Activated naive CD4-positive, alpha-beta T cell treated with anti-CD3 and anti-CD28 coated beads for 36 hours (primary cell): ENCODE measurements at regions of chr3 and their contacts with region 1.

Region 1: DNA sequence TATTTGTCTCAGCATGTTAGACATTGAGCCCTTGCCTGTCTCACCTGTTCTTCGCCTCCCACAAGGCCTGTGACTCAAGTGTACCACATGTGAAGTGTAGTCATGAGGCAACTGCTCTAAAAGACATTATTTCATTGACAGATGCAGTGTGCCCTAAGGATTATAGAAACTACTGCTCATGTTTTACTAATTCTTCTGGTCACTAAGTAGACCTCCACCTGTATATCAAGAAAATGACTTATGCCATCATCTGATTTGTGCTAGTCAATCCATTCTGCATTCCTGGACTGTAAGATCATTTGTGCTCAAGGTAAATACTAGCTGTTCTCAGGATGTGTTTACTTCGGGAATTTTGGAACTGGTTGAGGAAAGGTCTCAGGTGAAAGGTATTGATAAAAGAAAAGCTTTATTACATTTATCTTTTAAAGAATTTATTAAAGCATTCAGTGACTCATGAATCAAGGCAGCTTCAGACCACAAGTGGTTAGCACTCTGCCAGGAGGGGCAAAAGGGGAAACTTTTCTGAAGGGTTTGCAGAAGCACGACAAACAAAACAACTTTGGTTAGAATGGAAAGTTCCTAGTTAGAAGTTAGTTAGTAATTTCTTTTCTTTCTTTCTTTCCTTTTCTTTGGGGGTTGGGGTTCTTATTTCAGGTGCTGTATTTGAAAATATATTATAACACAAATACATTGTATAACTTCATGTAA is 465.3 kb upstream of the CBLB start:
- DNase-seq: peak; percentile 80
- H3K4me3 Mint-ChIP-seq: peak overlapping the region; percentile 68
- H3K27ac Mint-ChIP-seq: peak overlapping the region; percentile 95
- H3K4me1 Mint-ChIP-seq: peaks cover 71% of the 10 kb centered on the region
- H3K27me3 Mint-ChIP-seq: no peaks in the 10 kb centered on the region

Region 2: DNA sequence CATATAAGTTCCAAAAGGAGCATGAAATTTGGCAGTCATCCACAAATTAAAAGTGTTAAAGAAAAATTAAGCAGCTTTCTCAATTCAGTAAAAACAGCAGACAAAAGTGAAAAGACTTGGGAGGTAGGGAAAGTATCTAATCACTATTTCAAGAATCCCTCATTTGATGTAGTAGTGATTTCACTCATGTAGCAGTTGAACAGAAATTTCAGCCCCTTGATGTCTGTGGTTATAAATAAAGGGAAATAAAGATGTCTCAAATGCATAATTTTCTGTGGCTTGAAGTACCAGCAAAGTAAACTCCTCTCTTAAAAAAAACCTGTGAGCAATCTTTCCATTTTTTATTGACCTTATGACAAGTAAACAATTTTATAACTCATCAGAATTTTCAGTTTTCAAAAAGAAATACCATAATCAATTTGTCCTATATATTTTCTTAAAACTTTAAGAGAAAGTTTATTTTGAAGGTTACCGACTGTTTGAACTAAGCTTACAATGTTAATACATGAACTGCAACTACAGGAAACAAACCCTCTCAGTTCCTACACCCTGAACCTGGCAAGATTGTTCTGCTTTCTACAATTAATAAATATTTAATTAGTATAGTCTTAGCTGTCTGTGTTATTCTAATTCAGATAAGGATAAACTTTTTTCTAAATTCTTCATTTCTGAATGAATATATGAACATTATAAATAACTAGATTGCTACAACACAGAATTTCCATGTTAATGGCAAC is 559.5 kb before region 1 on chr3:
- CTCF ChIA-PET with region 1: no interaction called
- intact Hi-C with region 1: loop called (anchors 1 kb)
- DNase-seq: no peak
- H3K4me3 Mint-ChIP-seq: no peak overlapping the region
- H3K27ac Mint-ChIP-seq: peak overlapping the region; percentile 26
- H3K4me1 Mint-ChIP-seq: peaks cover 74% of the 10 kb centered on the region
- H3K27me3 Mint-ChIP-seq: no peaks in the 10 kb centered on the region

Region 3: GRCh38 chr3:106025151-106025722 is 308.8 kb before region 1 on chr3:
- CTCF ChIA-PET with region 1: no interaction called
- intact Hi-C with region 1: no loop called
- DNase-seq: no peak
- H3K4me3 Mint-ChIP-seq: no peak overlapping the region
- H3K27ac Mint-ChIP-seq: no peak overlapping the region
- H3K4me1 Mint-ChIP-seq: peaks cover 5% of the 10 kb centered on the region
- H3K27me3 Mint-ChIP-seq: no peaks in the 10 kb centered on the region

Region 4: GRCh38 chr3:106119614-106120082 is 214.4 kb before region 1 on chr3:
- CTCF ChIA-PET with region 1: no interaction called
- intact Hi-C with region 1: loop called (anchors 2 kb)
- DNase-seq: peak; percentile 57
- H3K4me3 Mint-ChIP-seq: no peak overlapping the region
- H3K27ac Mint-ChIP-seq: peak overlapping the region; percentile 73
- H3K4me1 Mint-ChIP-seq: peaks cover 28% of the 10 kb centered on the region
- H3K27me3 Mint-ChIP-seq: no peaks in the 10 kb centered on the region

Region 5: DNA sequence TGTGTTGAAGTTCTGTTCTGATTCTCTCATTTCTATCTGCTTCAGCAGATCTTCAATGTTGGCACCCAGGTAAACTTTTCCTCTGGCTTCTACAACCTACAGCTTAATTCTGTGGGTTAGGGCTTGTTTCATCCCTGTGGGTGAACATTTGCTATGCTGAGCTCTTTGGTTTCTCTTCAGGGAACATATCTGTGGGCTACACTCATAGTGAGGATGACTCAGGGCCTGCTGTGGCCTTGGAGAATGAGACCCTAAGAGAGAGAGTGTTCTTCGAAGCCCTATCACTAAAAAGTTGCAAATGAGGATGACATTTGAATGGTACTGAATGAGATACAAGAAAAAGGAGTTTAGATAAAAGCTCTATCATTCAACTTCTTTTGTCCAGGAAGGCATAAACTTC is 119.0 kb before region 1 on chr3:
- CTCF ChIA-PET with region 1: interaction called, 3 read pairs
- intact Hi-C with region 1: loop called (anchors 1 kb)
- DNase-seq: peak; percentile 56
- H3K4me3 Mint-ChIP-seq: no peak overlapping the region
- H3K27ac Mint-ChIP-seq: peak overlapping the region; percentile 81
- H3K4me1 Mint-ChIP-seq: peaks cover 61% of the 10 kb centered on the region
- H3K27me3 Mint-ChIP-seq: no peaks in the 10 kb centered on the region

Region 6: GRCh38 chr3:106473576-106474475 is 139.8 kb after region 1 on chr3:
- CTCF ChIA-PET with region 1: no interaction called
- intact Hi-C with region 1: loop called (anchors 1 kb)
- DNase-seq: peak; percentile 10
- H3K4me3 Mint-ChIP-seq: no peak overlapping the region
- H3K27ac Mint-ChIP-seq: peak overlapping the region; percentile 59
- H3K4me1 Mint-ChIP-seq: peaks cover 24% of the 10 kb centered on the region
- H3K27me3 Mint-ChIP-seq: no peaks in the 10 kb centered on the region